ENCODE measurements at regions of chr14 and their contacts with region 1.

Region 1: GRCh38 chr14:75170772-75171171 is 5.6 kb downstream of the TMED10 start:
- DNase-seq: peak in 2 of 3 donors; percentile 70 to 72
- H3K4me3 ChIP-seq: peak overlapping the region in 1 of 3 experiments; percentile 54
- H3K4me3 Mint-ChIP-seq: peak overlapping the region in 1 of 2 donors; percentile 1
- H3K27ac ChIP-seq: peak overlapping the region; percentile 38 to 70
- H3K27ac Mint-ChIP-seq: peak overlapping the region; percentile 78 to 95 (median 89)
- H3K4me1 ChIP-seq: peaks cover 56 to 93% of the 10 kb centered on the region in 2 donors
- H3K4me1 Mint-ChIP-seq: peaks cover 76% of the 10 kb centered on the region
- H3K27me3 ChIP-seq: no peaks in the 10 kb centered on the region
- H3K27me3 Mint-ChIP-seq: no peaks in the 10 kb centered on the region
- CTCF ChIP-seq: no peak

Region 2: DNA sequence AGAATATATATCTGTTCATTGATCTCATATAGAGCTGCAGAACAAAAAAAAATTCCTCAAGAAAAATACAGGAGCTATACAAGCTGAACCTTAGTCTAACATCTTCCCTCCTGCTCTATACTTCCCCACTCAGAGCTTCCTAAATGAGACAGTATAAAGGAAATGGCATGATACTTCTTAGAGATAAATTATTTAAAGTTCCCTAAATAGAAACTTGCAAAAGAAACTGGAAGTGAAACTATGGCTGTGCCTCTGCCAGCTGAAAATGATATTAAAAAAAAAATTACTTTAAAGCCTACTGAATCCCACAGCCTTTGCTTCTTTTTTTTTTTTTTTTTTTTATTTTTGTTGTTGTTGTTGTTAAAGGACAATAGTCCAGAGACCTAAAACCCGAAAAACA is 32.3 kb before region 1 on chr14:
- intact Hi-C with region 1: loop called (anchors 5 kb)
- DNase-seq: peak; percentile 49 to 83 (median 68)
- H3K4me3 ChIP-seq: peak overlapping the region in 1 of 3 experiments; percentile 50
- H3K4me3 Mint-ChIP-seq: no peak overlapping the region
- H3K27ac ChIP-seq: peak overlapping the region in 1 of 2 donors; percentile 55
- H3K27ac Mint-ChIP-seq: peak overlapping the region in 6 of 7 donors; percentile 46 to 92 (median 76)
- H3K4me1 ChIP-seq: peaks cover 41 to 59% of the 10 kb centered on the region in 2 donors
- H3K4me1 Mint-ChIP-seq: peaks cover 46% of the 10 kb centered on the region
- H3K27me3 ChIP-seq: no peaks in the 10 kb centered on the region
- H3K27me3 Mint-ChIP-seq: peaks cover 0 to 2% (median 0%) of the 10 kb centered on the region in 3 donors
- CTCF ChIP-seq: no peak